ENCODE measurements at regions of chr17 and their contacts with region 1.

Region 1: DNA sequence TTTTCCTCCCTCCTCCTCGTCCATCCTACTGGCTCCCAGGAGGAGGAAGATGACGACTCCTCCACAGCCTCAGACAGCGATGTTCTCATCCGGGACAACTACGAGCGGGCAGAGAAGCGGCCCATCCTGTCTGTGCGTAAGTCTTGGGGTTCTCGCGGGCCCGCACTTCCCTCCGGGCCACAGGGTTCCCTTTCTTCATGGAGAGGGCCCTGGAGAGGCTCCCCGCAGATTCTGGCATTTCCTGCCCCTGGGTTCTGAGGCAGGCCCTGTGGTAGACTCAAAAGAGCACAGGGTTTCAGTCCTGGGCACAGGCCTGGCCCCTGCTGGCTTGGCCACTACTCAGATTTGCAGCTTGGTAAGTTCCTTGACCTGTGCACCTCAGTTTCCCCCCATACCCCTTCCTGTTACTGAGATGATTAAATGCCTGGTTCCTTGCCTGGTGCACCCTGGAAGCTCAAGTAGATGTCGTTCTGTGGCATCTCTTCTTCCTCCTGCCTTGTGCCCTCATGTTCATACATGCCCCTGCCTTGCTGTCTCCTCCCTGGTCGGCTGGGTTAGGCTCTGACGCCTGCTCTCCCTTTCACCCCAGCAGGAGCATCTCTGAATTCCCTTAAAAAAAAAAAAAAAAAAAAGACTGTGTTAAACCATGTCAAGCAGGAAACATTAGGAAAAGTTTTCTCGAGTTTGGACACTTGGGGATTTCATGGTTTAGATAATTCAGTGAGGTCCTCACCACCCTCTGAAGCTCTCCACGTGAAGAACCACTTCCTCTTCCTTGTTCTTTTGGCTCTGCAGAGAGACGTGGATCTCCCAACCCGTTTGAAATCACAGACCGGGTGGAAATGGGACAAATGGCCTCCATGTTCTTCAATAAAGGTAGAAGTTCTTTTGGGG is 14.3 kb upstream of the NAT9 start:
- DNase-seq: peak in 2 of 9 donors; percentile 24
- ATAC-seq: no peak
- H3K4me3 ChIP-seq: no peak overlapping the region
- H3K4me3 Mint-ChIP-seq: peak overlapping the region; percentile 41 to 81 (median 72)
- H3K27ac ChIP-seq: peak overlapping the region; percentile 19
- H3K27ac Mint-ChIP-seq: peak overlapping the region; percentile 48 to 88 (median 81)
- H3K4me1 ChIP-seq: peaks cover 13 to 39% of the 10 kb centered on the region in 2 donors
- H3K4me1 Mint-ChIP-seq: peaks cover 28 to 64% (median 46%) of the 10 kb centered on the region in 7 donors
- H3K27me3 ChIP-seq: no peaks in the 10 kb centered on the region
- H3K27me3 Mint-ChIP-seq: no peaks in the 10 kb centered on the region

Region 2: GRCh38 chr17:74631468-74632450 is 158.6 kb before region 1 on chr17:
- CTCF ChIA-PET with region 1: no interaction called
- POLR2A ChIA-PET with region 1: no interaction called
- intact Hi-C with region 1: no loop called
- DNase-seq: no peak
- ATAC-seq: peak; percentile 89
- H3K4me3 ChIP-seq: no peak overlapping the region
- H3K4me3 Mint-ChIP-seq: no peak overlapping the region
- H3K27ac ChIP-seq: no peak overlapping the region
- H3K27ac Mint-ChIP-seq: no peak overlapping the region
- H3K4me1 ChIP-seq: no peaks in the 10 kb centered on the region
- H3K4me1 Mint-ChIP-seq: peaks cover 0 to 11% (median 9%) of the 10 kb centered on the region in 7 donors
- H3K27me3 ChIP-seq: peaks cover 0 to 5% of the 10 kb centered on the region in 2 donors
- H3K27me3 Mint-ChIP-seq: peaks cover 21 to 67% (median 34%) of the 10 kb centered on the region in 5 donors

Region 3: GRCh38 chr17:74712756-74713155 is 77.7 kb before region 1 on chr17 and contains the start of gene CD300LF:
- CTCF ChIA-PET with region 1: no interaction called
- POLR2A ChIA-PET with region 1: no interaction called
- intact Hi-C with region 1: no loop called
- DNase-seq: no peak
- ATAC-seq: peak; percentile 87
- H3K4me3 ChIP-seq: no peak within 1 kb of the TSS
- H3K4me3 Mint-ChIP-seq: peak within 1 kb of the TSS in 2 of 10 donors; percentile 4 to 69
- H3K27ac ChIP-seq: no peak within 1 kb of the TSS
- H3K27ac Mint-ChIP-seq: no peak within 1 kb of the TSS
- H3K4me1 ChIP-seq: peaks cover 0 to 5% of the 10 kb centered on the region in 2 donors
- H3K4me1 Mint-ChIP-seq: peaks cover 8 to 20% (median 9%) of the 10 kb centered on the region in 7 donors
- H3K27me3 ChIP-seq: no peaks in the 10 kb centered on the region
- H3K27me3 Mint-ChIP-seq: peaks cover 4 to 44% (median 13%) of the 10 kb centered on the region in 5 donors
- total RNA-seq, gene CD300LF: 0.46 to 41.0 (median 2.7) TPM in 4 of 5 experiments, not detected in the other

Region 4: GRCh38 chr17:74742153-74742515 is 48.3 kb before region 1 on chr17:
- CTCF ChIA-PET with region 1: interaction called, 27 read pairs
- POLR2A ChIA-PET with region 1: no interaction called
- intact Hi-C with region 1: loop called (anchors 1 kb)
- DNase-seq: peak in 5 of 9 donors; percentile 42 to 65 (median 45)
- ATAC-seq: peak; percentile 17
- H3K4me3 ChIP-seq: peak overlapping the region; percentile 10
- H3K4me3 Mint-ChIP-seq: peak overlapping the region; percentile 64 to 90 (median 84)
- H3K27ac ChIP-seq: peak overlapping the region; percentile 63
- H3K27ac Mint-ChIP-seq: peak overlapping the region; percentile 88 to 99 (median 95)
- H3K4me1 ChIP-seq: peaks cover 80 to 83% of the 10 kb centered on the region in 2 donors
- H3K4me1 Mint-ChIP-seq: peaks cover 71 to 93% (median 82%) of the 10 kb centered on the region in 7 donors
- H3K27me3 ChIP-seq: no peaks in the 10 kb centered on the region
- H3K27me3 Mint-ChIP-seq: no peaks in the 10 kb centered on the region

Region 5: DNA sequence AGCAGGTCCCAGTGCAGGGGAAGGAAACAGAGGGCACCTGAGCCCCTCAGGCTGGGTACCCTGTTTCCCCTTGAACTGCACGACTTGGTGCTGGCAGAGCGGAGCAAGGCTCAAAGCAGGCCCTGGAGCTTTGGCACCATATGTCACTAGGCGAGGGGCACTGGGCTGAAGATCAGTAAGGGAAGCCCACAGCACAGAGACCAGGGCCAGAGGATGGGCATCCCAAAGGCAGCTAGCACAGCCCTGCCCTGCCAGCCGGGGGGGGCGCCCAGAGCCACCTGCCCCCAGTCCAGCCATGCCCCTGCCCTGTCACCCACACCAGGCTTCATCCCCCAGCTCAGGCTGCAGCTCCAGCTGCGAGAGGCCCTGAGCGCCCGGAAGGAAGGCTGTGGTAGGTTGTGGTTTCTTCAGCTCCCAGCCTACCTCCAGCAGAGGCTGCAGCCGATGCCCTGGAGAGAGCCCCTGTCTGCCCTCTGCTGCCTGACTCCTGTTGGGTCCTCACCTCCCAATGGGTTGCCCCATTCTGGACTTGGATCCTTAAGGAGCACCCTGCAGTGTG is 31.1 kb before region 1 on chr17:
- CTCF ChIA-PET with region 1: interaction called, 13 read pairs
- POLR2A ChIA-PET with region 1: no interaction called
- intact Hi-C with region 1: no loop called
- DNase-seq: peak in 6 of 9 donors; percentile 47 to 60 (median 56)
- ATAC-seq: peak; percentile 86
- H3K4me3 ChIP-seq: peak overlapping the region; percentile 60
- H3K4me3 Mint-ChIP-seq: peak overlapping the region; percentile 82 to 92 (median 84)
- H3K27ac ChIP-seq: peak overlapping the region; percentile 49
- H3K27ac Mint-ChIP-seq: peak overlapping the region; percentile 75 to 97 (median 90)
- H3K4me1 ChIP-seq: peaks cover 69 to 82% of the 10 kb centered on the region in 2 donors
- H3K4me1 Mint-ChIP-seq: peaks cover 44 to 78% (median 62%) of the 10 kb centered on the region in 7 donors
- H3K27me3 ChIP-seq: no peaks in the 10 kb centered on the region
- H3K27me3 Mint-ChIP-seq: no peaks in the 10 kb centered on the region

Region 6: DNA sequence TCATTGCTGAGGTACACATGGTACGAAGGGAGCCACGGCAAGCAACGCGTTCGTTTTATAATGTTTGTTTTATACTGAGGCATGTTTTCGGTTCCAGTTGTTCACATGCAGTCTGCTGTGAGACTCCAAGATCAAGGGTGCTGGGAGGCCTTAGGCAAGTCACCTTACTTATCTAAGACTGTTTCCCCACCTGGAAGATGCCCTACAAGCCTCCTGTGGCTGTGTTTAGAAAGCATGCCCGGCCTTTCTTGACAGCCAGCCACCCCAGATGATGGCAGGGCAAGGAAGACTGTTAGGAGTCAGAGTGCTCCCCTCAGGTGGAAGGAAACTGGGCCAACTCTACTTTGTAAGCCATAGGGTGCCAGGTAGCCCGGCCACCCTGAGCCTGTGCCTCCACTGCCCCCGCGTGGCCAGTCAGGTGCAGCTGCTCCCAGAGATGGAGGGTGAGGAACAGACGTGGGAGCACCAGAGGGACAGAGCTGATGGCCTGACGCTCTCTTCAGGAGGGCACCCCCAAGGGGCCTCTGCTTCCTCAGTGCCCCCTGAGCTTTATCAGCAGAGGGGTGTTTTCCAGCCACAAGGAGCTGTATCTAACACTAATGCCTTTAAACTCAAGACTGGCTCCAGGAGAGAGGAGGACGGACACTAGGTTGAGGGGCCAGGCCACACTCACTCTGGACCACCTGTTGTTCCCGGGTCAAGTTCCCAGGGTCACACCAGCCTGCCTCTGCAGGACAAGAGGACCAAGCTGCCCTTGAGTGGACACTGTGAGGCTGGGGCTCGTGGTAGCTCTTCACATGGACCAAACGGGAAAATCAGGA is 19.7 kb before region 1 on chr17:
- CTCF ChIA-PET with region 1: interaction called, 14 read pairs
- POLR2A ChIA-PET with region 1: interaction called, 9 read pairs
- intact Hi-C with region 1: no loop called
- DNase-seq: peak; percentile 66 to 82 (median 78)
- ATAC-seq: peak; percentile 95
- H3K4me3 ChIP-seq: no peak overlapping the region
- H3K4me3 Mint-ChIP-seq: peak overlapping the region in 2 of 10 donors; percentile 16 to 21
- H3K27ac ChIP-seq: peak overlapping the region; percentile 4
- H3K27ac Mint-ChIP-seq: peak overlapping the region; percentile 42 to 92 (median 76)
- H3K4me1 ChIP-seq: peaks cover 9 to 17% of the 10 kb centered on the region in 2 donors
- H3K4me1 Mint-ChIP-seq: peaks cover 10 to 46% (median 38%) of the 10 kb centered on the region in 7 donors
- H3K27me3 ChIP-seq: no peaks in the 10 kb centered on the region
- H3K27me3 Mint-ChIP-seq: no peaks in the 10 kb centered on the region

Region 7: DNA sequence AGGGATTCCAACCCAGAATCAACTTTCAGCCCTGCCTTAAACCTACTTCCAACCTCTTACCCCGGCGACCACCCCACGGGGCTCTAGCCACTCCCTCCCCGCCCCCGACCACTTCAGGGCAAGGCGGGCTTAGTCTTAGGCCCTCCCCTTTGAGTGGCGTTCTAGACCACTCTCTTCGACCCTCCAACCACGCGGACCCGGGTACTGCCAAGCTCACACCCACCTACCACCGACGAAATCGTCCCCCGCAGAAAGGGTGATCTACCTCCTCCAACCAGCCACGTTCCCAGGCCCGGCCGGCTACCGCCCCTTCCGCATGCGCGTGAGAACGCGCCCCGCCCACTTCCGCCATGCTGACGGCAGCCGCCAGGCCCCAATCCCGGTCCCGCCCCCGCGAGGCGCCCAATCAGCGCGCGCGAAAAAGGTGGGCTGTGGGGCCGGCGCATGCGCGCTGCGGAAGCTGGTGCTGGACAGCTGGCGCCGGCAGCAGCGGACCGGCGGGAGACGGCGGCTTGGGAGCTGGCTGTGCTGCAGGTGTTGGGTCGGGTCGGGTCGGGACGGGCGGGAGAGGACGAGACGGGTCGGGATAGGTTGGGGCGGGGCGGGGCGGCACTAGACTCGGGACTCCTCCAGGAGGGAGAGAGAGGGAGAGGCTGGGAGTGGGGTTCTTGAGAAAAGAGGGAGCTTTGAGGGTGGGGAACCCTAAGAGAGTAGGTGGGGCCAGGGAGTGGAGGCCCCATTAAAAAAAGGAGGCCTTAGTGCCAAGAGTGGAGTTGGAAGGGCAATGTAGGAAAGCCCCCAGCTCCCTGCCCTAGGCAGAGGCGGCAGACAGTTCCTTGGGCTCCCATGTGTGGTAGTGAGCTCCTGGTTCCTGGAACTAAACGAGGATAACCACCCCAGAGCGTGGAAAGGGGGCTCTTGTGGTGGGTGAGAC is 14.1 kb before region 1 on chr17 and contains the start of gene NAT9:
- CTCF ChIA-PET with region 1: interaction called, 36 read pairs
- POLR2A ChIA-PET with region 1: interaction called, 9 read pairs
- intact Hi-C with region 1: loop called (anchors 1 kb)
- DNase-seq: peak; percentile 95 to 100 (median 98)
- ATAC-seq: peak; percentile 86
- H3K4me3 ChIP-seq: peak within 1 kb of the TSS; percentile 91
- H3K4me3 Mint-ChIP-seq: peak within 1 kb of the TSS; percentile 96 to 100 (median 98)
- H3K27ac ChIP-seq: peak within 1 kb of the TSS; percentile 78
- H3K27ac Mint-ChIP-seq: peak within 1 kb of the TSS; percentile 91 to 99 (median 96)
- H3K4me1 ChIP-seq: peaks cover 49 to 51% of the 10 kb centered on the region in 2 donors
- H3K4me1 Mint-ChIP-seq: peaks cover 32 to 76% (median 66%) of the 10 kb centered on the region in 7 donors
- H3K27me3 ChIP-seq: no peaks in the 10 kb centered on the region
- H3K27me3 Mint-ChIP-seq: no peaks in the 10 kb centered on the region
- total RNA-seq, gene NAT9: 41.4 to 78.8 (median 56.9) TPM

Region 8: GRCh38 chr17:74833501-74834377 is 43.3 kb after region 1 on chr17:
- CTCF ChIA-PET with region 1: no interaction called
- POLR2A ChIA-PET with region 1: no interaction called
- intact Hi-C with region 1: no loop called
- DNase-seq: no peak
- ATAC-seq: peak; percentile 64
- H3K4me3 ChIP-seq: no peak overlapping the region
- H3K4me3 Mint-ChIP-seq: no peak overlapping the region
- H3K27ac ChIP-seq: no peak overlapping the region
- H3K27ac Mint-ChIP-seq: no peak overlapping the region
- H3K4me1 ChIP-seq: no peaks in the 10 kb centered on the region
- H3K4me1 Mint-ChIP-seq: peaks cover 0 to 7% (median 0%) of the 10 kb centered on the region in 7 donors
- H3K27me3 ChIP-seq: no peaks in the 10 kb centered on the region
- H3K27me3 Mint-ChIP-seq: no peaks in the 10 kb centered on the region

Region 9: GRCh38 chr17:74859459-74860228 is 69.2 kb after region 1 on chr17 and contains the start of gene GRIN2C:
- CTCF ChIA-PET with region 1: interaction called, 78 read pairs
- POLR2A ChIA-PET with region 1: interaction called, 9 read pairs
- intact Hi-C with region 1: no loop called
- DNase-seq: peak in 8 of 9 donors; percentile 15 to 52 (median 42)
- ATAC-seq: peak; percentile 60
- H3K4me3 ChIP-seq: peak within 1 kb of the TSS; percentile 27
- H3K4me3 Mint-ChIP-seq: peak within 1 kb of the TSS; percentile 54 to 78 (median 68)
- H3K27ac ChIP-seq: no peak within 1 kb of the TSS
- H3K27ac Mint-ChIP-seq: peak within 1 kb of the TSS in 1 of 9 donors; percentile 65
- H3K4me1 ChIP-seq: peaks cover 12 to 15% of the 10 kb centered on the region in 2 donors
- H3K4me1 Mint-ChIP-seq: peaks cover 0 to 16% (median 12%) of the 10 kb centered on the region in 7 donors
- H3K27me3 ChIP-seq: peaks cover 8 to 17% of the 10 kb centered on the region in 2 donors
- H3K27me3 Mint-ChIP-seq: peaks cover 40 to 70% (median 56%) of the 10 kb centered on the region in 5 donors
- total RNA-seq, gene GRIN2C: 0.12 to 0.15 TPM in 2 of 5 experiments, not detected in the others

Region 10: GRCh38 chr17:74864866-74865395 is 74.5 kb after region 1 on chr17:
- CTCF ChIA-PET with region 1: interaction called, 78 read pairs
- POLR2A ChIA-PET with region 1: interaction called, 9 read pairs
- intact Hi-C with region 1: loop called (anchors 1 kb)
- DNase-seq: peak; percentile 35 to 73 (median 59)
- ATAC-seq: peak; percentile 74
- H3K4me3 ChIP-seq: no peak overlapping the region
- H3K4me3 Mint-ChIP-seq: peak overlapping the region in 1 of 10 donors; percentile 35
- H3K27ac ChIP-seq: no peak overlapping the region
- H3K27ac Mint-ChIP-seq: peak overlapping the region in 2 of 9 donors; percentile 16 to 47
- H3K4me1 ChIP-seq: peaks cover 12 to 14% of the 10 kb centered on the region in 2 donors
- H3K4me1 Mint-ChIP-seq: peaks cover 0 to 23% (median 16%) of the 10 kb centered on the region in 7 donors
- H3K27me3 ChIP-seq: peaks cover 4 to 7% of the 10 kb centered on the region in 2 donors
- H3K27me3 Mint-ChIP-seq: peaks cover 3 to 24% (median 11%) of the 10 kb centered on the region in 5 donors

Measured in naive thymus-derived CD4-positive, alpha-beta T cell (primary cell).